A549 (cell line): ENCODE measurements at regions of chr4 and their contacts with region 1.

Region 1: GRCh38 chr4:139030614-139031235 is 15.1 kb downstream of the NOCT start:
- DNase-seq: peak; percentile 35 to 72
- ATAC-seq: peak; percentile 55 to 66; a peak in 4 of 6 replicates
- H3K4me3 ChIP-seq: no peak overlapping the region
- H3K27ac ChIP-seq: no peak overlapping the region
- H3K4me1 ChIP-seq: peaks cover 15% of the 10 kb centered on the region; the same call in 2 of the 3 replicates
- CTCF ChIP-seq: peak; percentile 70
- EP300 ChIP-seq: no peak
- POLR2A ChIP-seq: no peak
- RAD21 ChIP-seq: peak; percentile 68 to 71

Region 2: GRCh38 chr4:139015269-139015947 is 15.3 kb before region 1 on chr4 and contains the start of gene NOCT:
- CTCF ChIA-PET with region 1: interaction called, 41 read pairs
- POLR2A ChIA-PET with region 1: interaction called, 4 read pairs
- DNase-seq: peak; percentile 72 to 91
- ATAC-seq: peak; percentile 92 to 93
- H3K4me3 ChIP-seq: peak within 1 kb of the TSS; percentile 91
- H3K27ac ChIP-seq: peak within 1 kb of the TSS; percentile 84 to 99
- H3K4me1 ChIP-seq: peaks cover 55% of the 10 kb centered on the region
- CTCF ChIP-seq: no peak
- EP300 ChIP-seq: no peak; a peak in 1 of 5 replicates
- POLR2A ChIP-seq: peak; percentile 95
- RAD21 ChIP-seq: no peak
- polyA plus RNA-seq, gene NOCT: 6.8 and 10.1 TPM in 2 replicates

Region 3: GRCh38 chr4:139042981-139043460 is 12.3 kb after region 1 on chr4:
- CTCF ChIA-PET with region 1: interaction called, 37 read pairs
- POLR2A ChIA-PET with region 1: no interaction called
- DNase-seq: no peak
- ATAC-seq: peak; percentile 18 to 54; a peak in 5 of 6 replicates
- H3K4me3 ChIP-seq: no peak overlapping the region
- H3K27ac ChIP-seq: no peak overlapping the region
- H3K4me1 ChIP-seq: no peaks in the 10 kb centered on the region
- CTCF ChIP-seq: no peak
- EP300 ChIP-seq: no peak
- POLR2A ChIP-seq: no peak
- RAD21 ChIP-seq: no peak

Region 4: DNA sequence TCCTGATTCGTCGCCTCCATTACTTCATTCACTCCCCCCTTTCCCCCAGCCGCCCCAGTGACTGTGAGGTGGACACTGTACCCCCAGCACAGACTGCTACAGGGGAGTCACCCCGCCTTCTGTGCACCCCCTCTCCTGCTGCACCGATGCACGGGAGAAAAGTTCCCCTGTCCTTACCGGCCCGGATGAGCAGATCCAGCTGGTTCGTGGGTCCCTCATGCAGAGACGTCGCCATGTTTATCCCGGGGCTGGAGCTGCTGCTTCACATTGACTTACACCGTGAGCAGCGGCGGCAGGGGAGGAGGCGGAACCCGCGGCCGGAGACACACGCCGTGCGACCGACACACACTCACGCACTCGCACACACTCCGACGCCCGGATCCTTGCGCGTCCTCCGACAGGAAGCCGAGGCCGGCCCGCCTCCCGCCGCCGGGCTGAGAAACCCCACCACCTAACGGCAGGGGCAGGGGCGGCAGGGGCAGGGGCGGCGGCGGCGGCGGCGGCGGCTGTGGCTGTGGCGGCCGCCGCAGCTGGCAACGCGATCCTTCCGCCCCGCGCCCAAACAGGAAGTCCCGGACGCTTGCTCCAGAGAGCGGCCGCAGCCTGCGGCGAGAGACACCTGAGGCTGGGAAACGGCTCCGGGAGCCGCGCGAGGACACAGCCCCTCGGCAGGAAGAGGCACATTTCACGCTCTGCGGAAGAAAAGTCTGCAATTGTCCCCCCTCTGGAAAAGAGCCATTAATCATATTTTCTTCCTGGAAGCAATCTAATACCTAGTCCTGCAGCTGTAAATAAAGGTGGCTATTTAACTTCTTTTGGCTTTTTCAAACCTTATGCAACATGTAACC is 53.5 kb after region 1 on chr4:
- CTCF ChIA-PET with region 1: interaction called, 16 read pairs
- POLR2A ChIA-PET with region 1: no interaction called
- DNase-seq: peak; percentile 60 to 96
- ATAC-seq: peak; percentile 77 to 85
- H3K4me3 ChIP-seq: peak overlapping the region; percentile 79
- H3K27ac ChIP-seq: peak overlapping the region; percentile 97 to 98
- H3K4me1 ChIP-seq: peaks cover 23% of the 10 kb centered on the region
- CTCF ChIP-seq: no peak
- EP300 ChIP-seq: no peak
- POLR2A ChIP-seq: peak; percentile 41
- RAD21 ChIP-seq: no peak